ENCODE measurements at regions of chr3 and their contacts with region 1.

Region 1: GRCh38 chr3:73490453-73491286 is 134.1 kb downstream of the PDZRN3 start:
- DNase-seq: no peak
- ATAC-seq: no peak
- H3K4me3 ChIP-seq: no peak overlapping the region
- H3K27ac ChIP-seq: no peak overlapping the region
- H3K4me1 ChIP-seq: no peaks in the 10 kb centered on the region
- CTCF ChIP-seq: no peak
- EP300 ChIP-seq: no peak
- POLR2A ChIP-seq: no peak
- RAD21 ChIP-seq: no peak

Region 2: DNA sequence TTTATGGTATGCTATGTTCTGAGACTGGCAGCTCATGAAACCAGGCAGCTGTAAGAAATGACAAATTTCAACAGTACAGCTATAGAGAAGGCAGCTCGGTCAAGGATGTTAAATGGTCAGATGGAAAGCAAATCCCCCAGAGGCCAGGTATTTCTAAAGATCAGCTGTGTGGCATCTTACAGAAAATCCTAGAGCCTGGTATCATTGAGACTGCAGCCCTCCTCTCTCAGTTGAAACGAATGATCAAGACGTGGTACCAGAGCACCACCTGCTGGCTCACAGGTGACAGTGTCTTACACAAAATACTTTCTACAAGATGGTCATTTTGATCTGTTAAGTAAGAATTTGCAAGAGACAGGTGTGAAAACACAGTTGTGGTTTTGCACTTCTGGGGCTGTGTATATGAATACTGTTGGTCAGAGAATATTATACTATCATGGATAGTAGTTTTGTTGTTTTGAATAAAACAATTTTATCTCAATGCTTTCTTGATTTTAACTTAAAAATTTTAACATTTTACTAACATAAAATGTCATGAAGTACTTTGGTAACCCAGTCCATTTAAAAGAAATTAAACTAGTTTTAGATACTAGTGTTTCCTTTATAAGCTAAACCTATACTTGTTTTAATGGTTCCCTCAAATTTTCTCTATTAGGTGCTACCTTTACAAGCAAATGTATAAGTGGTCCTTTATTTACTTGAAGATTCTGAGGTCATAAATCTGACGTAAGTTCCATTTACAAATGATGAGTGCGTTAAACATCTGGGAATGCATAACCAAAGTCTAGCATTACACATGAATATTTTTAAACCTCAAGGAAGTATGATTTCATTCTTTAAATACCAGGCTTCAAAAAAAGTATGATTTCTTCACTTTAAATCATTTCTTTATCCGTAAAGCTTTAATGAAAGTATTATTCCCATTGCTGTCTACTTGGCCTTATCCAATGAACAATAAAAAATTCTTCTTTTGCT is 12.2 kb after region 1 on chr3:
- CTCF ChIA-PET with region 1: interaction called, 13 read pairs
- POLR2A ChIA-PET with region 1: no interaction called
- DNase-seq: peak; percentile 40 to 76
- ATAC-seq: peak; percentile 83 to 87
- H3K4me3 ChIP-seq: no peak overlapping the region
- H3K27ac ChIP-seq: no peak overlapping the region
- H3K4me1 ChIP-seq: no peaks in the 10 kb centered on the region
- CTCF ChIP-seq: peak; percentile 77
- EP300 ChIP-seq: no peak
- POLR2A ChIP-seq: no peak
- RAD21 ChIP-seq: peak; percentile 80 to 88

Region 3: GRCh38 chr3:73549051-73549600 is 58.5 kb after region 1 on chr3:
- CTCF ChIA-PET with region 1: no interaction called
- POLR2A ChIA-PET with region 1: no interaction called
- DNase-seq: no peak
- ATAC-seq: no peak
- H3K4me3 ChIP-seq: no peak overlapping the region
- H3K27ac ChIP-seq: no peak overlapping the region
- H3K4me1 ChIP-seq: no peaks in the 10 kb centered on the region
- CTCF ChIP-seq: no peak
- EP300 ChIP-seq: no peak
- POLR2A ChIP-seq: no peak
- RAD21 ChIP-seq: no peak